ENCODE measurements at regions of chr5 and their contacts with region 1.

Region 1: DNA sequence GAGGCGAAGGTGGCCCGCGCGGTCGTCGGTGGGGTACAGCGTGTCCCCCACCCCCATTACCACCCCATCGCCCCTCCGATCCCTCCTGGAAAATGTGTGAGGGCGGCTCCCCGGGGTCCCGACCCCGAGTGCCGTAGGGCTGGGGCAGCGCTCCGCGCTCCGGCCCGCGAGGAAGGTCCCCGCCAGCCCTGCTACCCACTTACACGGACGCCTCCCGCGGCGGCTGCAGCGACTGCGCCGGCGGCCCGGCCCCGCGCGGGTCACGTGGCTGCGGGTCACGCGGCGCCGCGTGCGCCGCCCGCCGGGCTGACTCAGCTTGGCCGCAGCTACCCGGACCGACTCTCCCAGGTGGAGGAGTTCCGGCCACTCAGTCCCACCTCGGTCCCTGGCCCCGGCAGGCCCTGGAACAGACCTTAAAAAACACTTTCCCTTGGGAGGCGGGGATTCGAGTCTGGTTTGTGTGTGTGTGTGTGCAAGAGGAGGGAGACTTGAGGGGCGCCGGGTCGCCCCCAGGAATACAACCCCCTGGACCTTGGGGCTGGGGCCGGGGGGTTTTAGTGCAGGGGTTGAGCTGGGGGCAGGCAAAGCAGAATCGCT is at the start of gene GNPDA1:
- DNase-seq: peak; percentile 86 to 92
- ATAC-seq: peak; percentile 92 to 94 (median 94)
- H3K4me3 ChIP-seq: peak within 1 kb of the TSS; percentile 82
- H3K27ac ChIP-seq: peak within 1 kb of the TSS; percentile 91
- H3K4me1 ChIP-seq: peaks cover 20% of the 10 kb centered on the region
- H3K27me3 ChIP-seq: no peaks in the 10 kb centered on the region
- CTCF ChIP-seq: peak; percentile 33
- total RNA-seq, gene GNPDA1: 20.8 to 29.5 (median 25.7) TPM

Region 2: GRCh38 chr5:142115937-142116614 is 103.2 kb after region 1 on chr5:
- intact Hi-C with region 1: loop called in 1 of 2 experiments (anchors 5 kb)
- DNase-seq: peak in 1 of 2 donors; percentile 29
- ATAC-seq: peak in 2 of 4 donors; percentile 65 to 71
- H3K4me3 ChIP-seq: no peak overlapping the region
- H3K27ac ChIP-seq: no peak overlapping the region
- H3K4me1 ChIP-seq: peaks cover 66% of the 10 kb centered on the region
- H3K27me3 ChIP-seq: no peaks in the 10 kb centered on the region
- CTCF ChIP-seq: no peak

Measured in psoas muscle (tissue), 8 donors.